ENCODE measurements at regions of chr3 and their contacts with region 1.

Region 1: DNA sequence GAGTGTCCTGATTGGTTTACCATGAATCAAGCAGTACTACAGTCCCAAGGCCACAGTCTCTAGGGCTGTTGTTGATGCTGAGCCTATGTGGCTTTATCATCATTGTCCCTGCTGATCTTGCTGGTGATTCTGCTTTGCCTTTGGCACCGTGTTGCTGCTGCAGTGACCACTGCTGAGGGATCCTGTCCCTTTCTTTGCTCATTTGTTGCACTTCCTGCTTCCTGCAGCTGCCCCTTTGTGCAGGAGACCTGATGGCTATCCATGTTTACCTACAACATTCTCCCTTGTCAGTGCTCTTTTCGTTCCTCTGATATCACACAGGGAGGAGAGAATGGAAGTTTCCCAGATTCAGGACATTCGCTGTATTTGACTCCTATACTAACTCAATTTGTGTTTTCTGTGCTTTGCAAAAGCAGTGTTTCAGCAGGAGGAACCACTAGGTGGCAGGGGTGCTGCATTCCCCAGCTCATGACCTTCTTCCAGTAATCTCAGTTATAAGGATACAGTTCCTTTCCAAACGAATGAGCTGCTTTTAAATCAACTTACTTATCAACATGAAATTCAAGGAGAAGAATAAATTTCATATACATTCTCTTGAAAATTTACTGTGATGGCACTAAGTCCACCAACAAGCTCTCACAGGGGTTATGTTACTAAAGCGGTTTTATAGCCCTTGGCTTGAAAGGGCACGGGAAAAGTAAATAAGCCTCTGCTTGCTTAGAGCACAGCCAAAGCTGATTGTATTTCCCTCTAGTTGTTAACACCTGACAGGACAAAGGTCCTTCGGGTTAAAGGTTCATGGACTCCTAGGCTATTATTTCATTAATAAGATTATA is 9.7 kb upstream of the THUMPD3 start:
- DNase-seq: peak; percentile 71
- ATAC-seq: peak; percentile 44
- H3K4me3 ChIP-seq: no peak overlapping the region
- H3K4me3 Mint-ChIP-seq: no peak overlapping the region
- H3K27ac ChIP-seq: peak overlapping the region in 1 of 2 donors; percentile 74
- H3K27ac Mint-ChIP-seq: no peak overlapping the region
- H3K4me1 ChIP-seq: peaks cover 17 to 23% of the 10 kb centered on the region in 2 donors
- H3K4me1 Mint-ChIP-seq: peaks cover 26% of the 10 kb centered on the region
- H3K27me3 ChIP-seq: no peaks in the 10 kb centered on the region
- H3K27me3 Mint-ChIP-seq: no peaks in the 10 kb centered on the region
- CTCF ChIP-seq: peak; percentile 88

Region 2: GRCh38 chr3:9387322-9387655 is 34.2 kb after region 1 on chr3:
- CTCF ChIA-PET with region 1: interaction called, 12 read pairs
- POLR2A ChIA-PET with region 1: no interaction called
- intact Hi-C with region 1: no loop called
- DNase-seq: no peak
- ATAC-seq: no peak
- H3K4me3 ChIP-seq: no peak overlapping the region
- H3K4me3 Mint-ChIP-seq: no peak overlapping the region
- H3K27ac ChIP-seq: no peak overlapping the region
- H3K27ac Mint-ChIP-seq: no peak overlapping the region
- H3K4me1 ChIP-seq: peaks cover 0 to 6% of the 10 kb centered on the region in 2 donors
- H3K4me1 Mint-ChIP-seq: peaks cover 21% of the 10 kb centered on the region
- H3K27me3 ChIP-seq: no peaks in the 10 kb centered on the region
- H3K27me3 Mint-ChIP-seq: no peaks in the 10 kb centered on the region
- CTCF ChIP-seq: no peak

Region 3: GRCh38 chr3:9439331-9439730 is 86.2 kb after region 1 on chr3:
- CTCF ChIA-PET with region 1: interaction called, 12 read pairs
- POLR2A ChIA-PET with region 1: no interaction called
- intact Hi-C with region 1: no loop called
- DNase-seq: no peak
- ATAC-seq: no peak
- H3K4me3 ChIP-seq: no peak overlapping the region
- H3K4me3 Mint-ChIP-seq: no peak overlapping the region
- H3K27ac ChIP-seq: no peak overlapping the region
- H3K27ac Mint-ChIP-seq: no peak overlapping the region
- H3K4me1 ChIP-seq: no peaks in the 10 kb centered on the region
- H3K4me1 Mint-ChIP-seq: no peaks in the 10 kb centered on the region
- H3K27me3 ChIP-seq: no peaks in the 10 kb centered on the region
- H3K27me3 Mint-ChIP-seq: no peaks in the 10 kb centered on the region
- CTCF ChIP-seq: no peak

Region 4: DNA sequence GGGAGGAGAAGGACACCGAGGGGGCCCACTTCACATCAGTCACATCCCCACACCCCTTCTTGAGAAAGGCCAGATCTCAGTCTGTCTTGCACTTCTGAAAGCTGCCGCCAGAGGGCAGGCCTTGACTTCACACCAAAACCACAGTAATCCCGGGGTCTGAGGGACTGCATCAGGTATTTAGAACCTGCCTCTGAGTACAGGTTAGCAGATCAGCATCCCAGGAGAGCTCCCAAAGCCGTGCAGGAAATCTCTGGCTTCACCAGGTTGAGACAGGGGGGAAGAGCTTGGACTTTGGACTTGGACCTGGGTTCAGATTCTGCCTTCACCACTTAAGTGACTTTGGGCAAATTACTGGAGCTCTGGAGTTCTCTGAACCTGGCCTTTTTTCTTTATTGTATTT is 150.1 kb after region 1 on chr3:
- CTCF ChIA-PET with region 1: interaction called, 5 read pairs
- POLR2A ChIA-PET with region 1: no interaction called
- intact Hi-C with region 1: loop called (anchors 1 kb)
- DNase-seq: peak; percentile 80
- ATAC-seq: peak; percentile 71
- H3K4me3 ChIP-seq: no peak overlapping the region
- H3K4me3 Mint-ChIP-seq: no peak overlapping the region
- H3K27ac ChIP-seq: no peak overlapping the region
- H3K27ac Mint-ChIP-seq: no peak overlapping the region
- H3K4me1 ChIP-seq: peaks cover 23 to 27% of the 10 kb centered on the region in 2 donors
- H3K4me1 Mint-ChIP-seq: peaks cover 24% of the 10 kb centered on the region
- H3K27me3 ChIP-seq: peaks cover 0 to 47% (median 26%) of the 10 kb centered on the region in 4 experiments
- H3K27me3 Mint-ChIP-seq: peaks cover 41% of the 10 kb centered on the region
- CTCF ChIP-seq: peak; percentile 85

Region 5: GRCh38 chr3:9721015-9721699 is 368.0 kb after region 1 on chr3:
- CTCF ChIA-PET with region 1: interaction called, 11 read pairs
- POLR2A ChIA-PET with region 1: no interaction called
- intact Hi-C with region 1: no loop called
- DNase-seq: no peak
- ATAC-seq: no peak
- H3K4me3 ChIP-seq: no peak overlapping the region
- H3K4me3 Mint-ChIP-seq: no peak overlapping the region
- H3K27ac ChIP-seq: peak overlapping the region in 1 of 2 donors; percentile 1
- H3K27ac Mint-ChIP-seq: peak overlapping the region; percentile 80
- H3K4me1 ChIP-seq: peaks cover 10 to 13% of the 10 kb centered on the region in 2 donors
- H3K4me1 Mint-ChIP-seq: peaks cover 20% of the 10 kb centered on the region
- H3K27me3 ChIP-seq: no peaks in the 10 kb centered on the region
- H3K27me3 Mint-ChIP-seq: peaks cover under 1% of the 10 kb centered on the region
- CTCF ChIP-seq: no peak

Measured in B cell (primary cell).